Panc1 (cell line): ENCODE measurements at regions of chr3 and their contacts with region 1.

Region 1: DNA sequence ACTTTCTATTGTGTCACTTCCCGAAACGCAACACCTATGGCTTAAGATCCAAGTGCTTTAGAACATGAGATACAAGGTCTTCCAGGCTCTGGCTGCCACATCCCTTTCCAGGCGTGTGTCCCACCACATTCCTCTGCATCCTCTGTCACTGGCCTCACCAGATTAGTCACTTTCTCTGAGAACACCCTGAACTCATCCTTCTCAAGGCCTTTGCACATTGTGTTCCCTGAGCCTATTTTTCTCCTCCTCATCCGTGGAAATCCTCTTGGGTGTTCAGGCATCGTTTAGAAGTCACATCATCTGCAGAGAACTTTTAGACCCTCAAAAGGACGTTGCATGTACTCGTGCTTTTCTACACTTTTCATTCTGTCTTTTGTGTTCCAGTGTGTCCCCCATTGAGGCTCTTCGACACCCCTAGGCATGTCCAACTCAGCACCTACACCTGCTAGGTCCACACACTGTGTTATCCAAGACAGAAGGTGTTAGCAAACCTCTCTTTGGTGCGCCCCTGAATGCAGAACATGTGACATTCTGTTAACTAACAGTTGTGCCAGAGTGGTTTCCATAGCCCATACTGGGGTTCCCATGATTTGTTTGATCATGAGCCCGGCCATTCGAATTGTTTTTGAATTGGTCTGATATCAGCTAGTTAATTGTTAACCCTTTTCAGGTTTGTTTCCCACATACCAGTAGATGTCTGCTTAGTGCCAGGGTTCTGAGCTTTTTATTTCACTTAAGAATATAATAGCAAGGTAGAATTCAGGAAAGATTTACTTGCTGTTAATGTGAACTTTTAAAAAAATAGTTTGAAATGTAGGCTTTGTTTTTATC is 67.2 kb downstream of the LPP start:
- DNase-seq: no peak
- ATAC-seq: no peak
- H3K4me3 ChIP-seq: no peak overlapping the region
- H3K27ac ChIP-seq: no peak overlapping the region
- H3K4me1 ChIP-seq: 0 out of 2 replicates have a peak, but pooled peaks cover 4% of the 10 kb centered on the region
- H3K27me3 ChIP-seq: no peaks in the 10 kb centered on the region
- CTCF ChIP-seq: no peak

Region 2: DNA sequence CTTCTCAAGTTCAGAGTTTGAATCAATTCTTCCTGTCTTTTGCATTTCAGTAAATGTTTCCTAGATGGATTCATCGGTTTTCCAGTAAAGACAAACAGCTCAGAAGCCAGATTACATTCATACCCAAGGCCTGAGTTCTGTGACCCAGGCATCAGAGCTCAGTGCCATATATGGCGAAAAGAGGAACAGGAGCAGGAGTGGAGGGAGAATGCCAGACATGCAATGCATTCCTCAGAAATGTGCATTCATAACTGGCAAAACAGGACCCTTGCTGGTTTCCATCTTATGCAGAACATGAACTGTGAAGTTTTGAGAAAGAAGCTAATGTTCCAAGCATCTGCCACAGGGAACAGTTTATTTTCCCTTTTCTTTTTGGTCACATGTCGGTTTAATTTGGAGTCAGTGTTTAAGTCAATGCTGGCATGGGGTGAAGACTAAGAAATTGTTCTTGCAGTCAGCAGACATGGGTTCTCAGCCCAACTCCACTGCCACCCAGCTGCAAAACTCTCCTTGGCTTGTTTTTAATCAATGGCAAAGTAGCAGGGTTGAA is 49.3 kb after region 1 on chr3:
- CTCF ChIA-PET with region 1: interaction called, 13 read pairs
- POLR2A ChIA-PET with region 1: no interaction called
- in situ Hi-C with region 1: no loop called
- intact Hi-C with region 1: no loop called
- DNase-seq: no peak
- ATAC-seq: peak; percentile 74
- H3K4me3 ChIP-seq: peak overlapping the region in 1 of 2 experiments; percentile 10; a peak in 1 of 4 replicates
- H3K27ac ChIP-seq: peak overlapping the region; percentile 88
- H3K4me1 ChIP-seq: peaks cover 85% of the 10 kb centered on the region
- H3K27me3 ChIP-seq: no peaks in the 10 kb centered on the region
- CTCF ChIP-seq: no peak